ENCODE measurements at regions of chr2 and their contacts with region 1.

Region 1: GRCh38 chr2:24315669-24316068 is 44.7 kb downstream of the ITSN2 start:
- DNase-seq: no peak
- ATAC-seq: no peak
- H3K4me3 ChIP-seq: no peak overlapping the region
- H3K27ac ChIP-seq: no peak overlapping the region
- H3K4me1 ChIP-seq: no peaks in the 10 kb centered on the region; the same call in 1 of the 2 replicates
- H3K27me3 ChIP-seq: no peaks in the 10 kb centered on the region
- CTCF ChIP-seq: no peak
- POLR2A ChIP-seq: no peak
- RAD21 ChIP-seq: no peak

Region 2: DNA sequence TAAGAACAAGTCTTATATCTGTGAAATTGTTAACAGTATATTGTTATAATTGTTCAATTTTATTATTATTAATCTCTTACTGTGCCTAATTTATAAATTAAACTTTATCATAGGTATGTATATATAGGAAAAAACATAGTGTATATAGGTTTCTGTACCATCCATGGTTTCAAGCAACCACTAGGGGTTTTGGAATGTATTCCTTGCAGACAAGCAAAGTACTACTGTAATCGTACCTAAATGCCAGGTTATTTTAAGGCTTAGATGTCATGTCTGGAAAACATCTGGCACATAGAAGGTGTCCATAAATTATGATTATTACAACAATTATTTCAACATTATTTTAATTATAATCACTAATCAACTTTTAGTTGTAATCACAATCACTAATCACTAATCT is 36.3 kb after region 1 on chr2:
- CTCF ChIA-PET with region 1: no interaction called
- POLR2A ChIA-PET with region 1: no interaction called
- dilution Hi-C with region 1: no loop called
- in situ Hi-C with region 1: no loop called
- intact Hi-C with region 1: loop called (anchors 2 kb)
- DNase-seq: no peak
- ATAC-seq: no peak
- H3K4me3 ChIP-seq: no peak overlapping the region
- H3K27ac ChIP-seq: no peak overlapping the region
- H3K4me1 ChIP-seq: no peaks in the 10 kb centered on the region; the same call in 1 of the 2 replicates
- H3K27me3 ChIP-seq: no peaks in the 10 kb centered on the region
- CTCF ChIP-seq: no peak
- POLR2A ChIP-seq: no peak
- RAD21 ChIP-seq: no peak

Measured in IMR-90 (cell line).